Activated T-helper 1 cell treated with anti-CD3 and anti-CD28 coated beads, Interleukin-12 subunit alpha, Interleukin-12 subunit beta, Interleukin-2, Interleukin-4 antibody, amounts not matched to agents 30 ng/mL and 10 ng/mL and 1 ng/mL, durations not matched to agents 14 hours and 24 hours and 36 hours (primary cell): ENCODE measurements at regions of chr2 and their contacts with region 1.

Region 1: GRCh38 chr2:20365249-20365817 is 14.7 kb upstream of the PUM2 start:
- DNase-seq: peak; percentile 67
- H3K4me3 Mint-ChIP-seq: peak overlapping the region; percentile 2
- H3K27ac Mint-ChIP-seq: peak overlapping the region; percentile 77
- H3K4me1 Mint-ChIP-seq: peaks cover 37% of the 10 kb centered on the region
- H3K27me3 Mint-ChIP-seq: no peaks in the 10 kb centered on the region

Region 2: GRCh38 chr2:19901442-19902215 is 463.7 kb before region 1 on chr2 and contains the start of gene TTC32:
- intact Hi-C with region 1: loop called (anchors 5 kb)
- DNase-seq: peak; percentile 89
- H3K4me3 Mint-ChIP-seq: peak within 1 kb of the TSS; percentile 91
- H3K27ac Mint-ChIP-seq: peak within 1 kb of the TSS; percentile 94
- H3K4me1 Mint-ChIP-seq: peaks cover 48% of the 10 kb centered on the region
- H3K27me3 Mint-ChIP-seq: peaks cover 9% of the 10 kb centered on the region
- total RNA-seq, gene TTC32: 14.0 and 15.7 TPM in 2 replicates

Region 3: DNA sequence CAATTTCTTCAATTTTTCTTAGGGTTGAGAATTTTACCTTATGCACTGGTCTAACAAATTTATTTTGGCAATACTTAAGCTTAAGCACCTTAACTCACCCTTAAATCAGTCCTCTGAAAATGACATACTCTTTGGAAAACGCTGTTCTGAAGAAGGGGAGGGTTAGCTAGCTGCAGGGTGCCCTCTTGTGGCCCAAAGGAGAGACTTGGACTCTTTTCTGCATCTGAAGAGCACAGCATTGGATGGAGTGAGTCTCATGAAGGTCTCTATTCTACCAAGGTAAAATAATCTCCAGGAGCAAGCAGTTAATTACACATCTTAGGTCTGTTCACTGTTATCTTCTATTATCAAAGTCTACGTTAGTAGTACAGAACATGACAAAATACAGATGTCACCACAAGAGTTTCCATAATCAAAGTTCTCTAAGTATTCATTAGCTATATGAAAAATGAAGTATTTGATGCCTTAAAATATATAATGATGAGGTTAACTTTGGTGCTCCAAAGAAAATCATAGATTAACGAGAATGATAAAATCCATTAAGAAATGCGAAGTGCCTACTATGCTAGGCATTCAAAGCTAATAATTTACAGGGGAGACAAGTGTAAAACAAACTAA is 39.1 kb before region 1 on chr2:
- intact Hi-C with region 1: loop called (anchors 1 kb)
- DNase-seq: peak; percentile 25
- H3K4me3 Mint-ChIP-seq: no peak overlapping the region
- H3K27ac Mint-ChIP-seq: peak overlapping the region; percentile 4
- H3K4me1 Mint-ChIP-seq: peaks cover 76% of the 10 kb centered on the region
- H3K27me3 Mint-ChIP-seq: no peaks in the 10 kb centered on the region

Region 4: GRCh38 chr2:20430461-20431300 is 65.3 kb after region 1 on chr2:
- intact Hi-C with region 1: loop called (anchors 1 kb)
- DNase-seq: no peak
- H3K4me3 Mint-ChIP-seq: peak overlapping the region; percentile 1
- H3K27ac Mint-ChIP-seq: peak overlapping the region; percentile 45
- H3K4me1 Mint-ChIP-seq: peaks cover 38% of the 10 kb centered on the region
- H3K27me3 Mint-ChIP-seq: no peaks in the 10 kb centered on the region

Region 5: DNA sequence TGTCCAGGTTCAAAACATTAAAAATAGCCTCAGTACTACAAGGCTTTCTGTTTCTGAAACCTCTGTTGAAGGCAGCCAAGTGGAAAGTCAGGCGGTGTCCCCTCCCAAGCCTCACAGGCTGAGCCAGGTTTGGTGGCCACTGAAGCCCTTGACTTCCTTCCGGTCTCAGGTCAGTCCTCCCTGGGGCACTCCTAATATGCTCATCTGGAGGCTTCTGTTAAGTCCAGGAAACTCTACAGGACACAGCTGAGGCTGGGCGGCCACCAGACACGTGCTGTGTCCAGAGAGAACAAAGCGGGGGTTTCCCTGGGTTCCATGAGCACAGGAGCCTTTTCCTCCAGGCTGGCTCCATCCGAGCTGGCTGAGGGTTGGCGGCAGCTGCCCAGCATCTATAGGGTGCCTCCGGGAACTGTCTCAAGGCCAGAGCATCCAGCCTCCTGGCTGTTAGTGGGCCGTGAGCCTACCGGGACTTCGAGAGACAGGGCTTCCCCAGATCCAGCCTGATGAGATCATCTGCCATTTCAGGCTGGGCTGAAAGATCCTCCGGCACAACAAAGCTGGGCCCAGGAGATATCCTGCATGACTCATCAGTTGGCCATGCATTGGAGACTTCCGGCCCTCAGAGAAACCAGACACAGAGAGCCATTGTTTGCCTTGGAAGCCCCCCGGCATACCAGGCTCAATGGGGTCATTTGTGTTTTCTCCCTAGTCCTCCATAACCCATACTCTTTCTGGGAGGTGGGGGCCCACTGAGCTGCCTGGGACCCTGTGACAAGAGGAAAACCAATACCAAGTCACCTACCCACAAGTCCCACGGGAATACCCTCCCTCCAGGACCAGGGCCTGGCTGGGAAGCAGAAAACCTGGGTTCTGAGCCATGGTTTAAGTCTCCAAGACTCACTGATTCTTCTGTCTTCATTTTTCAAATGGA is 213.8 kb after region 1 on chr2:
- intact Hi-C with region 1: loop called (anchors 10 kb)
- DNase-seq: no peak
- H3K4me3 Mint-ChIP-seq: no peak overlapping the region
- H3K27ac Mint-ChIP-seq: no peak overlapping the region
- H3K4me1 Mint-ChIP-seq: peaks cover 27% of the 10 kb centered on the region
- H3K27me3 Mint-ChIP-seq: no peaks in the 10 kb centered on the region